Kidney (tissue), 22 donors: ENCODE measurements at regions of chr2 and their contacts with region 1.

Region 1: DNA sequence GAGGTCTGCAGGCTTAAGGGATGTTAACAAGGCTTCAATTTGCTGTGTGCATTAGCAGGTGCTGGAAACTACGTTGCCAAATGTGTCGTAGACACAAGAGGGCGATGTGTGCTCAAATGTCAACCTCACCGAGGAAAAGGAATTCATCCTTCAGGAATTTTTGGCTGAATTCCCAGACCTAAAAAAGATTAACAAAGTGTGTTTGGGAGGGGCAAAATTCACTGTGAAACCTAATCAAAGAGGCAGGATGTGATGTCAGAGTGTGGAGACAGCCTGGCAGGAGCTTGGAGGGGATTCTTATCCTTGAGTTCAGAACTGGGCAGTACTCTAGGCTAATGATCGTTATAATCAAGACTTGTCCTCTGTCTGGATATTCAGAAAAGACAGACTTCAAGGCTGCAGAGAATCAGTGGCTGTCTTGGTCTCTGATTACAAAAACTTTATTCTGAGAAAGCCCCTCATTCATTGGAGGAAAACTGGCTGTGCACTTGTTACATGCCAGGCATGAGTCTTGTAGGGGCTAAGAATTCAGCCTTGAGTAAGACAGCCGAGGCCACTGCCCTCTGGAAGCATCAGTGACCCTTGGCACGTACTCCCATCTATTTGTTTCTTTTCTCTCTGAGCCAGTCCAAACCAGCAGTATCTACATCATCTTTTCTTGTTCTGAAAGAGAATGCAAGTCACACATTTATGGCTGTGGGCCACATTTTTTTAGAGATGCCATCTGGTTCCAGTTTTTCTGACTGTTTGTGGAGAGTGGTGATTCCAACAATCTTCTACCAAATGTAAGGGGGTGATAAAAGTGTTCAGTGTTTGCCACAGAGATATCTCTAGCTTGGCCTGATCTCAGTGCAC is 18.7 kb upstream of the SCYGR1 start:
- DNase-seq: peak in 4 of 5 donors; percentile 67 to 98 (median 88)
- H3K4me3 ChIP-seq: peak overlapping the region in 2 of 3 donors; percentile 9 to 19
- H3K27ac ChIP-seq: peak overlapping the region; percentile 72 to 85
- H3K4me1 ChIP-seq: peaks cover 6 to 15% (median 8%) of the 10 kb centered on the region in 3 donors
- H3K27me3 ChIP-seq: no peaks in the 10 kb centered on the region
- CTCF ChIP-seq: peak; percentile 90

Region 2: GRCh38 chr2:227766373-227766883 is 360.0 kb after region 1 on chr2:
- intact Hi-C with region 1: loop called (anchors 10 kb)
- DNase-seq: peak; percentile 77 to 90 (median 85)
- H3K4me3 ChIP-seq: no peak overlapping the region
- H3K27ac ChIP-seq: peak overlapping the region in 1 of 2 donors; percentile 54
- H3K4me1 ChIP-seq: peaks cover 3 to 17% (median 4%) of the 10 kb centered on the region in 3 donors
- H3K27me3 ChIP-seq: no peaks in the 10 kb centered on the region
- CTCF ChIP-seq: peak; percentile 91